HAP-1 (cell line): ENCODE measurements at regions of chr1 and their contacts with region 1.

Region 1: GRCh38 chr1:21255278-21255942 is 34.9 kb downstream of the ECE1 start:
- DNase-seq: peak; percentile 74 to 92
- H3K4me3 ChIP-seq: no peak overlapping the region
- H3K4me1 ChIP-seq: no peaks in the 10 kb centered on the region
- H3K27me3 ChIP-seq: no peaks in the 10 kb centered on the region

Region 2: GRCh38 chr1:21368515-21369289 is 113.3 kb after region 1 on chr1:
- in situ Hi-C with region 1: loop called (anchors 5 kb)
- DNase-seq: peak; percentile 79 to 88
- H3K4me3 ChIP-seq: no peak overlapping the region
- H3K4me1 ChIP-seq: no peaks in the 10 kb centered on the region
- H3K27me3 ChIP-seq: no peaks in the 10 kb centered on the region

Region 3: GRCh38 chr1:21449906-21450305 is 194.5 kb after region 1 on chr1:
- in situ Hi-C with region 1: no loop called
- DNase-seq: no peak
- H3K4me3 ChIP-seq: no peak overlapping the region
- H3K4me1 ChIP-seq: no peaks in the 10 kb centered on the region
- H3K27me3 ChIP-seq: no peaks in the 10 kb centered on the region